GM10248 (cell line): ENCODE measurements at regions of chr16 and their contacts with region 1.

Region 1: DNA sequence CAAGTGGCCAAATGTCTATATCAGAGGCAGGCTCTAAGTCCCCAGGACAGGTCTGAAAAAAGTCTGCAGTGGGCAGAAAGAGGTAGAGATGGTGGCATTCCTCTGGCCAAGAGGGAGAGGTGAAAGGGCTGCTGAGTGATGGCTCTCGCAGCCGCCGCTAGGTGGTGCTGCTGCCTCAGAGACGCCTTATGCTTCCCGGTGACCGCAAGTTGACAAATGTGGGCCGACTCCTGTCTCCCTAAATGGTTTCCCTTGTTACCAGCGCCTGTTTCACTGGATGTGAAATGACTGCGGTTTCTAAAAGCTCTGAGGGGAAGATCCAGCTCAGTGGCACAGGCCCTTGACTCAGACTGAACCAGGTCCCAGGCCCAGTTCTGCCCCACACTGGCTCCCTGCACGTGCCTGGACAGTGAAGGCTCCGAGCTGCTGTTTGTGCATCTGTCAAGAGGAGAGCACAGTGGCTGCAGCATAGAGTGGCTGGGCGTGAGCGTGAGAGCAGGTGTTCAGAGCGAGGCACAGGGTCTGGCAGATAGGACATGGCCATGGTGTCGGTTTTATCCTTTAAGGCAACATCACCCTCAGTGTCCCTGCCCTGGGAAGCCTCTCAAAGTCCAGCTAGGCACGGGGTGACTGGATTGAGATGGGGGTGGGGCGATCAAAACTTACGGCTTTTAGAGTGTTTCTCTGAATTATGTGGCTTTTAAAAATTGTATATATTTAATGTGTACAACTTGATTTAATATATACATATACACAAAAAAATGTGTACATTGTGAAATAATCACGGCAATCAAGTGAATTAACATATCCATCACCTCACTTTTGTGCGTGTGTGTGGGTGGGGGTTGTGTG is 19.9 kb downstream of the CLEC16A start:
- DNase-seq: peak; percentile 75
- CTCF ChIP-seq: peak; percentile 95

Region 2: DNA sequence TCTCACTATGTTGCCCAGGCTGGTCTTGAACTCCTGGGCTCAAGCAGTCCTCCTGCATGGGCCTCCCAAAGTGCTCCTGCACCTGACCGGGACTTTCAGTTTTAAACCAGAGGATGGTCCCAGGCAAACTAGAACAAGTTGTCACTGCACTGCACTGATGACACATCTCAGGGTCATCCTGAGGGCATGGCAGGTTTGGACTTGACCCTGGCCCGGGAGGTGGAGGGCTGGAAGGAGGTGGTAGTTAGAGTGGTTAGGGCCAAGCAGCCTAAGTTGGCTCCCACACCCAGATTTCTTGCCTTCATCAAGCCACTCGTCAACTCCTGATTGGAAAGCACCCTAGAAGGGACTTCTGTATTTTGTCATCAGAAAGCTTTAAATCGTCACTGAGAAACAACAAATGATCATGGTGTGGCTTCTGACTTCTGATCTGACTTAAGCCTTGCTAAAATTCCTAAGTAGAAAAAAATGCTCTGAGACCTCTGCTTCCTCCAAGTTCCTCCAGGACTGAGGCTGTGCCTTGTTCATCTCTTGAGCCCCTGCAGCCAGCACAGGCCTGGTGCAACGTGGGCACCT is 427.4 kb before region 1 on chr16:
- CTCF ChIA-PET with region 1: no interaction called
- POLR2A ChIA-PET with region 1: no interaction called
- DNase-seq: no peak
- CTCF ChIP-seq: no peak

Region 3: DNA sequence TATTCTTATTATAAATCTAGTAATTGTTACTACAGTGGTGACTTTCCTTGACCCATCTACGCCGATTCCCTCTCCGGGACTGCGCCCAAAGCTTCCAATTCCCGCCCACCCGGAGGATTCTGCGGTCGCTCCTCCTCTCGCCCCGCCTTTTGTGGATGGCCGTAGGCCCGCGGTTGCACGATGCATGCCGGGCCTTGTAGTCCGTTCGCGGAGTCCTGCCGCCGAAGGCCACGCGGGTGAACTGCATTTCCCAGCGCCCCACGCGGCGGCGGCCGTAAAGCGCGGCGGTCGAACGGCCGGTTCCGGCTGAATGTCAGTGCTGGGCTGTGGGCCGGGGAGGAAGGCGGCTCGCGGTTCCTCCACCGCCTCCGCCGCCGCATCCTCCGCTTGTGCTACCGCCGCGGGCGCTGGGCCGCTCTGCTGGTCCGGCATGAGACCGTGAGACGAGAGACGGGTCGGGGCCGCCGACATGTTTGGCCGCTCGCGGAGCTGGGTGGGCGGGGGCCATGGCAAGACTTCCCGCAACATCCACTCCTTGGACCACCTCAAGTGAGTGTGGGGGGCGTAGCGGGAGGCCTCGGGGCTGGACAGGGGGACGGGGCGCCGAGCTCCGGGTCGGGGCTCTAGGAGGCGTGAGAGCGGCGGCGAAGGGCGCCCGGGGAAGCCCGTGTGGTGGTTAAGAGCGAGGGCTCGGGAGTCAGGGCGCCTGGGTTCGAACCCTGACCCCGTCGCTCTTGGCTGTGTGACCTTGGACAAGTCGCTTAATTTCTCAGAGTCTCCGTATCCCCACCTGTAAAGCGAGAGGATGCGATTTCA is 19.8 kb before region 1 on chr16 and contains the start of gene CLEC16A:
- CTCF ChIA-PET with region 1: interaction called, 305 read pairs
- POLR2A ChIA-PET with region 1: no interaction called
- DNase-seq: peak; percentile 92
- CTCF ChIP-seq: no peak

Region 4: DNA sequence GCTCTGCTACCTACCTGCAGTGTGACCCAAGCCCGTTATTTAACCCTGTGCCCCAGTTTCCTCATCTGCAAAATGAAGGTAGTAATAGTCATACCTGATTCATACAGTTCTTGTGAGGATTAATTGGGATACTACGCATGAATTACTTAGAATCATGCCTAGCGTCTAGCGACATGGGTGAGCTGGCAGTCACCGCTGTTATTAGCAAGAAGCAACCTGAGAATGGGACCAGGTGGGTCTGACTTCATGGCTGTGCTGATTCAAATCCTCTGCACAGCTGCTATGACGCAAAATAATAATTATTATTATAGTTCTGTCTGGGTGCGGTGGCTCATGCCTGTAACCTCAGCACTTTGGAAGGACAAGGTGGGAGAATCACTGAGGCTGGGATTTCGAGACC is 283.9 kb after region 1 on chr16:
- CTCF ChIA-PET with region 1: interaction called, 14 read pairs
- POLR2A ChIA-PET with region 1: interaction called, 28 read pairs
- DNase-seq: no peak
- CTCF ChIP-seq: no peak

Region 5: GRCh38 chr16:11370084-11370931 is 406.0 kb after region 1 on chr16:
- CTCF ChIA-PET with region 1: interaction called, 27 read pairs
- POLR2A ChIA-PET with region 1: no interaction called
- DNase-seq: peak; percentile 46
- CTCF ChIP-seq: no peak

Region 6: DNA sequence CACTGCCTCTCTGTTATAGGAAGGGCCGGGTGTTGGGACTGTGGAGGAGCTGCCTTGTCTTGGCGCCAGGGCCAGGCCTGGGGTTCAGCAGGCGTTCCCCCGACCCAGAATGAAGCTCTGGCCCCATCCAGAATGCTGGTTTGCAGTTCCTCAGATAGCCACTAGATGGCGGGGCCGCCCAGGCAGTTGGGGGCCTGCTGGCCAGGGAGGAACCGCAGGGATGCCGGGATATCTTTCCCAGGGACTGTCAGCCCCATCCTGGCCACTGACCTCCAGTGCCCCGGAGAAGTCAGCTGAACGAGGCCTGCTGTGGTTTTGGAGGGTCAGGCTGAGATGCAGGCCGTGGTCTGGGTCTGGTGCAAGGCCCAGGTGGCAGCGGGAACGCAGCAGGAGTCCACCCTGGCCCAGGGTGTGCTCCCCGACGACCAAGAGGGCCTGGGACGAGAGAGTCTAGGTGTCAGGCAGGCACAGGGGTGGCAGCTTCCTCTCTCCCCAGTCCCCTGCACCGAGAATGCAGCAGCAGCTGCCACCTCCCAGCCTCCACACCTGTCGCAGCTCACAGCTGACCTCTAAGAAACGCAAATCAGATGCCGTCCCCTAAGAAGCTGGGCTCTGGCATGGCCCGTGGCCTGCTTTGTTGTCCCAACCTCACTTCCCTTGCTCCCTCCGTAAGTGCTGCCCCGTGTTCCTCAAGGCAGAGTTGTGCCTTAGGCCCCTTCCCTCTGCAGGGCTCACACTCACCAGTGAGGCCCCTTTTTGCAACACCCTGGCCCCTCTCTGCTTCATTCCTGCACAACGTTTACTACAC is 432.2 kb after region 1 on chr16:
- CTCF ChIA-PET with region 1: interaction called, 28 read pairs
- POLR2A ChIA-PET with region 1: no interaction called
- DNase-seq: peak; percentile 89
- CTCF ChIP-seq: peak; percentile 97